ENCODE measurements at regions of chr4 and their contacts with region 1.

Region 1: DNA sequence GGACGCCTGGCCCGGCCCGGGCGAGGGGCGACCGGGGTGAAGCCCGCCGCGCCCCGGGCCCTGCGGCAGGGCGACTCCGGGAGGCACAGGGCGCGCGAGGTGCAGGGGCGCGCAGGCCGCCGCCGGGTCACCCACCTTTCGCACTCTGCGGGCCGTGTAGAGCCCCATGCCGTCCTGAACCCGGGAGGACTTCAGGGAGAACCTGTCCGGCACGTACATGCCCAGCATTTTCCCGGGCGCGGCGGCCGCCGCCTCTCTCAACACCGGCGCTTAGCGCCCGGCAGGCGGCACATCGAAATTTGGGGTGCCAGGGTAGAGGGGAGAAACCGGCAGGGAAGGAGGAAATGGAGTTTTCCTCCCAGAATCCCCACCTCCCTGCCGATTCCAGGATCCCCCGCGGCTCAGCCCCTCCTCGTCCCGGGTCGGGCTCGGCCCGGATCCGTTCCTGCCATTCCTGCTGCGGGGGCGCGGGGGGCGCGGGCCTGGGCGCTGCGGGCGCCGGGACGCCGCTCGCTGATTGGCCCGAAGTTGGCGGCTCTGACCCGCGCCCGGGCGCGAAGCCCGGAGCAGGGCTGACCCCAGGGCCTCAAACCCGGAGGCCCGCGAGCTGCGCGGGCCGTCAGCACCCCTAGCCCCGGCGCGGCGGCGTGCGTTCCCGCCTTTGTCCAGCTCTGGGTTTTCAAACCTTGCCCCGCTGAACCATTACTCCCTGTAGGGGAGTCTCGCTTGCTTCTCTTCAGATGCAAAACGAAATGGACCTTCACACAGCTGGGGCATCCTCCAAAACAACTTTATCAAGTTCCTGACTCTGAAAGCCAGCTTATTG is at the start of gene PRDM5:
- DNase-seq: peak; percentile 3
- H3K4me3 Mint-ChIP-seq: peak within 1 kb of the TSS; percentile 86
- H3K27ac Mint-ChIP-seq: peak within 1 kb of the TSS; percentile 60
- H3K4me1 Mint-ChIP-seq: peaks cover 11% of the 10 kb centered on the region
- H3K27me3 Mint-ChIP-seq: peaks cover 52% of the 10 kb centered on the region
- total RNA-seq, gene PRDM5: not detected in 2 replicates

Region 2: DNA sequence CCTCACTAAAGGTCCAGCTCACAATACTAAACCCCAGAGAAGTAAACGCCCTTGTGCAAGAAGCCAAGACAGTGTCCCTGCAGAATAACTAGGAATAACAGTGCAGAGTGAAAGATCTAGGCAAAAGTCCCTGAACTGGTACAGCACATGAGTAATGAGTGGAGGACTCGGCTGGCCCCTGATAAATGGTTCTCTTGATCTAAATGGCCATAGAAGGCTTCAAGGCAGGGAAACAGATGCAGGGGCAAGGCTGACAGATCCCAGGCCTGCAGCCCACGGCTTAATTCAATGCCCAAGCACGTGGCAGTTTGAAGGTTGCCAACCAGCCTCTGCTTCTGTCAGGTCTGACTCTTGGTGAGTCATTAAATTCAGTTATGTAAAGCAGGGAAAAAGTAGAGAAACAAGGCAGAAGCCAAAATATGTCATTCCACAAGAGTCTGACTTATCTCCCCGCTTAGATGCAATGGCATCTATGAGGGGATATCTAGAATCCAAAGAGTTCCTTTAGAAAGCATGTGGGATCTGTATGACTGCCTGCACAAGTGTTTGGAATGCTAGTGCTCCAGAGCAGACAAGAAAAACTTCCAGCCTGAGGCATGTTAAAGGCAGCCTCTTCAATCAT is 121.3 kb before region 1 on chr4:
- intact Hi-C with region 1: no loop called
- DNase-seq: no peak
- H3K4me3 Mint-ChIP-seq: no peak overlapping the region
- H3K27ac Mint-ChIP-seq: no peak overlapping the region
- H3K4me1 Mint-ChIP-seq: no peaks in the 10 kb centered on the region
- H3K27me3 Mint-ChIP-seq: peaks cover 7% of the 10 kb centered on the region

Region 3: GRCh38 chr4:121072224-121073003 is 149.8 kb after region 1 on chr4 and contains the start of gene NDNF:
- intact Hi-C with region 1: loop called (anchors 2 kb)
- DNase-seq: peak; percentile 34
- H3K4me3 Mint-ChIP-seq: peak within 1 kb of the TSS; percentile 82
- H3K27ac Mint-ChIP-seq: peak within 1 kb of the TSS; percentile 59
- H3K4me1 Mint-ChIP-seq: peaks cover 20% of the 10 kb centered on the region
- H3K27me3 Mint-ChIP-seq: peaks cover 83% of the 10 kb centered on the region
- total RNA-seq, gene NDNF: 0.39 TPM in 1 of 2 replicates, not detected in the other